Common myeloid progenitor, CD34-positive (primary cell): ENCODE measurements at regions of chr19 and their contacts with region 1.

Region 1: DNA sequence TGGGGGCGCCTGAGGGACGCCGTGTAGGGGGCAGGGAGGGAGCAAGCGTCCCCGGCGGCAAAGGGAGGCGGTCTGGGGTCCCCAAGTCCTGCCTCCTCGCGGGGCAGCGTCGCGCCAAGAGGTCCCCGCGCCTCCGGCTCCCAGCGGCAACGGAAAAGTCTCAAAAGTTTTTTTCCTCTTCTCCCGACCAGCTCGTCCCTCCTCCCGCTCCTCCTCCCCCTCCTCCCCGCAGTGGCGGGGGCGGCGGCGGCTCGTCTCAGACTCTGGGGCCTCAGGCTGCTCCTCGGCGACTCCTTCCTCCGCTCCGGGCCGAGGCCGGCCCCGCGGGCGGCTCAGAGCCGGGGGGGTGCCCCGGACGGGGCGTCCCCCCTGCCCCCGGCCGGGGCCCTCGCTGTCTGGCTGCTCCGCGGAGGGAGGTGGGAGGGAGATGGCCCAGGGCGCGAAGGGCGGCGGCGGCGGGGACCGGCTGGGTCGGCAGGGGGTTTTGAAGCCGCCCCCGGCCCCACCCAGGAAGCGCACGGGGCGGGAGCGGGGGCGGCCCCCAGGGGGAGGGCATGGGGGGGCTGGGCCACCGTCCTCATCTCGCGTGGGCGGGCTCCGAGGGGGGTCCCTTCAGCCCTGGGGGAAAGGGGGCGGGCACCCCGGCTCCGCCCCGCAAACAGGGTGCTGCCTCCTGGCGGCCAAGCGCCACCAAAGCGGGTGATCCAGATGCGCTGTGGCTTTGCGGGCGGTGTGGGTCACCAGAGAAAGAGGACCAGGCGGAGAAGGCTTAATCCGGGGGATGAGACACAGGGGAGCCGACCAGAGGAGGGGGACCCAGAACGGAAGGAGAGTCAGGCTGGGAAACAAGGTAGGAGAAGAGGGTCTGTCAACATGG is at the start of gene TGFB1:
- DNase-seq: peak; percentile 85 to 90 (median 90)
- H3K4me3 ChIP-seq: peak within 1 kb of the TSS; percentile 79 to 97 (median 92)
- H3K27ac ChIP-seq: peak within 1 kb of the TSS; percentile 64 to 88
- H3K4me1 ChIP-seq: peaks cover 6 to 82% (median 78%) of the 10 kb centered on the region in 4 experiments
- H3K27me3 ChIP-seq: no peaks in the 10 kb centered on the region

Region 2: DNA sequence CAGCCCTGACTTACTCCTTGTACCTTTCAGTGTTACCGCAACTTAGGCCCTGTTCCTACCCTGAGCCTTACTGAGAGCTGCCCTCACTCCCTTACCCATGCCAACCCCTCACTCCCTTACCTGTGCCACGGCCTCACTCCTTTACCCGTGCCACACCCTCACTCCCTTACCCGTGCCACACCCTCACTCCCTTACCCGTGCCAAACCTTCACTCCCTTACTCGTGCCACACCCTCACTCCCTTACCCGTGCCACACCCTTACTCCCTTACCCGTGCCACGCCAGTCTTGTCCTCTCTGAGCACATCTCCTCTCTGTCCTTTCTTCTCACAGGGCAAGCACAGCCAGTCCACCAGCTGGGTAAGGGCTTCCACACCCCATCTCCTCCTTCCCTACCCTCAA is 114.3 kb before region 1 on chr19:
- CTCF ChIA-PET with region 1: no interaction called
- POLR2A ChIA-PET with region 1: no interaction called
- DNase-seq: no peak
- H3K4me3 ChIP-seq: no peak overlapping the region
- H3K27ac ChIP-seq: no peak overlapping the region
- H3K4me1 ChIP-seq: peaks cover 0 to 8% (median 0%) of the 10 kb centered on the region in 4 experiments
- H3K27me3 ChIP-seq: no peaks in the 10 kb centered on the region

Region 3: DNA sequence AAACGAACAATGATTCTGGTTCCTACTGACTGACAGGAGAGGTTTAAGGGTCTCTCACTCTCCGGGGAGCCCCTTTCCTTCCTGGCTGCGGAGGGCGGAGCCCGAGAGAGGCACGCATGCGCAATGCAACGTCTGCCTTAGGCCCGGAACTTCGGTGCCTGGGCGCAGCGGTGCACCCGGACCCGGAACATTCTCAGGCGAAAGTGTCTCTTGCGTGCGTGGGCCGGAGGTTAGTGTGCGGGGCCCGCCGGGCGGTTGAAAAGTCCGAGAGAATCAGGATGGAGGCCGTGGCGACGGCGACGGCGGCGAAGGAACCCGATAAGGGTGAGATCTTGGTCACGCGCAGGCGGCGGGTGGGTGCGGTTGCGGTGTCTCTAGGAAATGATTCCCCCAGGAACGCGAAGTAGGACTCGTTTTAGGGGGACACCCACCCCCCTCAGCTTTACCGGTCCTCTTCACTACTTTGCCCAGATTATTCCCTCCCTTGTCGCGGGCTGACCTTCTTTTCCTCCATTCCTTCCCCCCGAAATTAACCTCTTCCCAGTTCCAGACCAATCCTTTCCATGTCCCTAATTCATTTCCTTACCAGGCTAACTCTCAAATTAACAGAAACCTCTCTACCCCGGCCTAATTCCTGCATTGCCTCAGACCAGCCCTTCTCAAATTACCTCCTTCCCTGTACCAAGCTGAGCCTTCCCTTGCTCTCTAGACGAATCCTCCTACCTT is 43.5 kb before region 1 on chr19 and contains the start of gene CCDC97:
- CTCF ChIA-PET with region 1: interaction called, 11 read pairs
- POLR2A ChIA-PET with region 1: interaction called, 25 read pairs
- DNase-seq: peak; percentile 90 to 96 (median 95)
- H3K4me3 ChIP-seq: peak within 1 kb of the TSS; percentile 72 to 99 (median 94)
- H3K27ac ChIP-seq: peak within 1 kb of the TSS; percentile 94 to 97
- H3K4me1 ChIP-seq: peaks cover 25 to 60% (median 55%) of the 10 kb centered on the region in 4 experiments
- H3K27me3 ChIP-seq: no peaks in the 10 kb centered on the region

Region 4: DNA sequence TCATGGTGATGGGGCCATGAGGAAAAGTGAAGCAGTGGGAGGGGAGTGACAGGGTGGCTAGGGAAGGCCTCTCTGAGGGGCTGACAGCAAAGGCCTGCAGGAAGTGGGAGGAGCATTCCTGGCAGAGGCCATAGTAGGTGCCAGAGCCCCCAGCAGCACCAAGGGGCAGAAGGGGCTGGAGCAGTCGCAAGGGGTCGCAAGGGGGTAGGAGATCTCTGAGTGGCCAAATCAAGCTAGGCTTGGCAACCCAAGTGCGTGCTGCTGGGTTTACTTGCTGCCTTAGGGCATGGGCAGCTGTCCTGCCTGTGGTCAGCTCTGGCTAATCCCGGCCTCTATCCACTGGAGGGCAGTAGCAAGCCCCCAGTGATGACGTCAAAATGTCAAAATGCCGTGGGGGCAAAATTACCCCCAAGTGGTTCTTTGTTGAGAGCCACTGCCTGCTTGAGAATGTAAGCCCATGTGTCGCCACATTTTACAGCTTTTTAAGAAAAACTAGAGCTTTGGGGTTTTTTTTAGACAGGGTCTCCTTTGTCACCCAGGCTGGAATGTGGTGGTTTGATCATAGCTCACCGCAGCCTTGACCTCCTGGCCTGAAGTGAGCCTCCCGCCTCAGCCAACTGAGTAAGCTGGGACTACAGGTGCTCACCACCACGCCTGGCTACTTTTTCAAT is 32.0 kb before region 1 on chr19:
- CTCF ChIA-PET with region 1: interaction called, 69 read pairs
- POLR2A ChIA-PET with region 1: interaction called, 165 read pairs
- DNase-seq: peak in 1 of 3 donors; percentile 43
- H3K4me3 ChIP-seq: peak overlapping the region in 2 of 7 experiments; percentile 20 to 28
- H3K27ac ChIP-seq: peak overlapping the region in 1 of 2 experiments; percentile 88
- H3K4me1 ChIP-seq: peaks cover 9 to 63% (median 61%) of the 10 kb centered on the region in 4 experiments
- H3K27me3 ChIP-seq: no peaks in the 10 kb centered on the region

Region 5: GRCh38 chr19:41327576-41328156 is 26.0 kb before region 1 on chr19:
- CTCF ChIA-PET with region 1: interaction called, 69 read pairs
- POLR2A ChIA-PET with region 1: interaction called, 165 read pairs
- DNase-seq: peak; percentile 84 to 95 (median 91)
- H3K4me3 ChIP-seq: peak overlapping the region in 4 of 7 experiments; percentile 48 to 62 (median 56)
- H3K27ac ChIP-seq: peak overlapping the region in 1 of 2 experiments; percentile 27
- H3K4me1 ChIP-seq: peaks cover 28 to 80% (median 79%) of the 10 kb centered on the region in 4 experiments
- H3K27me3 ChIP-seq: no peaks in the 10 kb centered on the region

Region 6: DNA sequence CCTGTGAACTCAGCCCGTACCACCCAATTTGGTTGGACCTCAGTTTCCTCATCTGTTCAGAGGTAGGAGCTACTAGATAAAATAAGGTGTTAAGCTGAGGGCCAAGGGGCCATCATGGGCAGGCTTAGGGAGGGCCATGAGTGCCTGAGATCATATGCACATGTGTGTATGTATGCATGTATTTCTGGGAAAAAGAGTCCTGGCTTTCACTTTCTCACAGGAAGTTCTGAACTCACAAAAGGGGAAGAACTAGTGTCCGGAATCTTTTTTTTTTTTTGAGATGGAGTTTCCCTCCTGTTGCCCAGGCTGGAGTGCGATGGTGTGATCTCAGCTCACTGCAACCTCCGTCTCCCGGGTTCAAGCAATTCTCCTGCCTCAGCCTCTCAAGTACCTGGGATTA is 18.9 kb before region 1 on chr19:
- CTCF ChIA-PET with region 1: interaction called, 27 read pairs
- POLR2A ChIA-PET with region 1: interaction called, 165 read pairs
- DNase-seq: peak in 2 of 3 donors; percentile 68 to 71
- H3K4me3 ChIP-seq: peak overlapping the region in 4 of 7 experiments; percentile 17 to 26 (median 26)
- H3K27ac ChIP-seq: peak overlapping the region in 1 of 2 experiments; percentile 64
- H3K4me1 ChIP-seq: peaks cover 3 to 33% (median 26%) of the 10 kb centered on the region in 4 experiments
- H3K27me3 ChIP-seq: no peaks in the 10 kb centered on the region

Region 7: DNA sequence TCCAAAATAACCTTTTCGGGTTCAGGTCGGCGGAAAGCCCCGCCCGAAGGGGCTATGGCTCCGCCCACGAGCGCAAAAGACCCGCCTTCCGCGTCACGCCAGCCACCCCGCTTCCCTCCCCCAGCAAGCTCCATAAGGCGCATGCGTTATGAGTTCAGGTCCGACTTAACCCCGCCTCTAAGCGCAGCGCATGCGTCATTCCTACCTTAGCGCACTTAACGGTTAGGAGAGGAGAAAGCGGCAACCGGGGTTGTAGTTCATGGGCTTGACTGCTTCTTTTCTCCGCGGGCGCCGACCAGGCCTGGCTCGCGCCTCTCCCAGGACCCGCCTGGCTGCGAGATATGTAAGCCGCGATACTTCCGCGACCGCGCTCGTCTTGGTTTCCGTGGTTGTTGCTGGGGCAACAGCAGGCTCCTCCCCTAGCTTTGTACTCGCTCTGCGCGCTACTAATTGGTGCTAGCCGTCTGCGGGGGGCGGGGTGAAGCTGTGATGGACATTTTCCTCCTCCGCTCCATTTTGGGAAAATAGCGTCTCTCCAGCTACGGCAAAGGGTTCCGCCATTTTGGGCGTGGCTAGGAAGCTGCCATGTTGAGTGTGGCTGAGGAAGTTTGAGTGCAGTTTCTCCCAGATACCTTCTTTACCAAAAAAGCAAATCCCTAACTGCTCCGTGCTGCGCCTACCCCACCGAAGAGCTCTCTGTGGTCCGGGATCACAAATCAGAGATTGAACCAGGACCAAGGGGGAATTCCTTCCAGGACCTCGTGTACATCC is 10.2 kb after region 1 on chr19 and contains the start of gene B9D2:
- CTCF ChIA-PET with region 1: interaction called, 56 read pairs
- POLR2A ChIA-PET with region 1: interaction called, 31 read pairs
- DNase-seq: peak; percentile 99 to 100 (median 99)
- H3K4me3 ChIP-seq: peak within 1 kb of the TSS; percentile 68 to 93 (median 88)
- H3K27ac ChIP-seq: peak within 1 kb of the TSS; percentile 100
- H3K4me1 ChIP-seq: peaks cover 8 to 54% (median 46%) of the 10 kb centered on the region in 4 experiments
- H3K27me3 ChIP-seq: no peaks in the 10 kb centered on the region

Region 8: GRCh38 chr19:41426952-41427646 is 73.4 kb after region 1 on chr19 and contains the start of gene B3GNT8:
- CTCF ChIA-PET with region 1: interaction called, 11 read pairs
- POLR2A ChIA-PET with region 1: interaction called, 6 read pairs
- DNase-seq: peak; percentile 71 to 86 (median 82)
- H3K4me3 ChIP-seq: peak within 1 kb of the TSS; percentile 31 to 90 (median 70)
- H3K27ac ChIP-seq: peak within 1 kb of the TSS; percentile 66 to 86
- H3K4me1 ChIP-seq: peaks cover 4 to 68% (median 64%) of the 10 kb centered on the region in 4 experiments
- H3K27me3 ChIP-seq: no peaks in the 10 kb centered on the region